Mucosa of descending colon (tissue), 3 donors: ENCODE measurements at regions of chr17 and their contacts with region 1.

Region 1: DNA sequence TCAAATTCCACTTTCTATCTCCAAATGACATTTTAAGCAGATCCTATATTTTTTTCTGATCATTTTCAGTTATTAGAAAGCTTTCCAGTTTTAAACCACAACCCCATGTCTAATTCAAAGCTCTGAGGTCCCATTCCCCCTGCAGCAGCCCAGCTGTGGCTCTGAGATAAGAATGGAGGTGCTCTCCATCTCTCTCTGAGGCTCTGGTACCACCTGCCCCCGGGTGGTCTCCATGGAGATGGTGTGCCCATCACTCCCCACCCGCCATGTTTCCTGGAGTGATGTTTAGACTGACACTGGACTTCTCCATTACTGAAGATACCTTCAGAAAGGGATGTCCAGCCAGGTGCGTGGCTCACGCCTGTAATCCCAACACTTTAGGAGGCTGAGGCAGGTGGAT is 68.1 kb upstream of the SEC14L1 start:
- DNase-seq: no peak
- ATAC-seq: no peak
- H3K4me3 ChIP-seq: no peak overlapping the region
- H3K4me1 ChIP-seq: no peaks in the 10 kb centered on the region
- CTCF ChIP-seq: no peak

Region 2: DNA sequence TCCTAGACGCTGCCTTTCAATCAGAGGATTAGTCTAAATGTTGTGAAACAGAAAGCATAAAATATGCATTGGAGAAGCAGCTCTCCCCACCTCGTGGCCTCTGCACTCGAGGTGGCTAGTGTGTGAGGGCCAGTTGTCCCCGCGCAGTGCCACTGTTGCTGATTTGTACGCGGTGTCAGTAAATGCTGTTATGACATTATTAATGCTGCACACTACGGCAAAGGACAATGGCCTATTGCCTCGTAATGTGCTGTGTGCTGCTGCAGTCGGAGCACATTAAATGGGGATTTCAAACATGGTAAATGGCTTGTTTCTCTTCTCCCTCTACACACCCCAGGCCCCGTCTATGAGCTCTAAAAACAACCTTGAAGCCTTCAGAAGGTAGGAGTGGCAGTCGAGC is 210.2 kb before region 1 on chr17:
- intact Hi-C with region 1: loop called in 1 of 2 experiments (anchors 5 kb)
- DNase-seq: no peak
- ATAC-seq: no peak
- H3K4me3 ChIP-seq: no peak overlapping the region
- H3K4me1 ChIP-seq: no peaks in the 10 kb centered on the region
- CTCF ChIP-seq: no peak

Region 3: GRCh38 chr17:76909971-76910760 is 162.5 kb before region 1 on chr17:
- intact Hi-C with region 1: no loop called
- DNase-seq: peak in 2 of 3 donors; percentile 54 to 57
- ATAC-seq: peak; percentile 28
- H3K4me3 ChIP-seq: no peak overlapping the region
- H3K4me1 ChIP-seq: no peaks in the 10 kb centered on the region
- CTCF ChIP-seq: no peak

Region 4: DNA sequence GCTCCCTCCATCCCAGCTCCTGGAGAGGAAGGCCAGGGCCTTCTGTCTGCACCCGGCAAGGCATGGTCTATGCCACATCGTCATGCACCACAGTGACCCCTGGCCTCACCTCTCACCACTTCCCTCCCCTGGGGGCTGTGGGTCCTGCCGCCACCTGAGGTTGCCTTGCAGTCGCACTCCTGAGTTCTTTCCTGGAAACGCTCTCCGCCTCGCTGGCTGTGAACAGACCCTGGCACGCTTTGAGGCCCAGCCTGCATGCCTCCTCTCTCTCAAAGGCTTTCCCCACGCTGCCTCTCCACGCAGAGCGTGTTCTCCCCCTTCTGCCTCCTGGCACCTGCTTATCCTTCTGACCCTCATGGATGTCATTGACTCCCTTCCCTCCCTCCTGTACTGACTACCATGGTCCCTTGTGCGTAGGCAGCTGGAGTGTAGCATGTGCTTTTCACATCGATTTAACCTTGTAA is 113.5 kb after region 1 on chr17:
- intact Hi-C with region 1: no loop called
- DNase-seq: no peak
- ATAC-seq: peak; percentile 28
- H3K4me3 ChIP-seq: no peak overlapping the region
- H3K4me1 ChIP-seq: no peaks in the 10 kb centered on the region
- CTCF ChIP-seq: no peak